Activated CD8-positive, alpha-beta T cell treated with anti-CD3 and anti-CD28 coated beads for 36 hours (primary cell): ENCODE measurements at regions of chr9 and their contacts with region 1.

Region 1: DNA sequence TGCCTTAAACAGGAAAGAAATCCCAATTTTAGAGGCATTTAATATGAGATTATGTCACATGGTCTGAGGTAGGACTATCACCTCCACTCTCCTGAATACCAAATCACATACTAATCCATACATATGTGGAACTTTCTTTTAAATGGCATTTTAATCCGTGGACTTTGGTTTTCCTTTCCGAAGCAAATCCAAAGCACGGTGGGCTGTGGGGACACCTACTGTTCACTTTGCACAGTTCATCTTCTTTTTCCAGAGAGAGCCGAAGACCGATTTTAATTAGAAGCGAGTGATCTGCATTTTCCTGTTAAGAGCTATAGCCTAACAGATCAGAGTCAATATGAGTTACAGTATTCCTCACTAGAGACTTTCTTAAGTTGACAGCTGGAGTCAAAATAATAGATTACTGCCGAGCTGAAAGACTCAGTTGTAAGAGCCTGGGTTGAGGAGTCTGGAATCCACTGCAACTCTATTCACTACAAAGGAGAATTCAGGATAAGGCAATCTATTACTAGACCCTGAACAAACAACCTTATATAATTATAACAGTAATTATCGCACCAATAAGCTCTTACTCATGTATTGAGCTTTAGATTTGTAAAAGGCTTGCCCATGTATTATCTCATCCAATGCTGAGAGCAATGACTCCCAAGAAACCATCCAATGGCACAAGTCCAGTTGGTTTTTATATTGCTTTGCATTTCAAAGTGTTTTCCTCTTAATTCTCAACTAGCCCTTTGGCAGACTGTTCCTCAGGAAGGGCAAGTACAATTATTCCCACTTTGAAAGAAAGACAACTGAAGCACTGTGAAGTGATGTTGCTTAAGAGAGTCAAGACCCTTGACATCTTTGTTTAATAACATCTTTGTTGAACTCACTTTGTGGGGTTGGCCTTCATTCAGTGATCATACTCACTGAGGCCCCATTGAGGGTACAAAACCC is 144.7 kb downstream of the TRPM6 start:
- DNase-seq: peak; percentile 41
- ATAC-seq: no peak
- H3K4me3 Mint-ChIP-seq: no peak overlapping the region
- H3K27ac Mint-ChIP-seq: no peak overlapping the region
- H3K4me1 Mint-ChIP-seq: no peaks in the 10 kb centered on the region
- H3K27me3 Mint-ChIP-seq: peaks cover 17% of the 10 kb centered on the region
- CTCF ChIP-seq: peak; percentile 69

Region 2: GRCh38 chr9:74595286-74595685 is 147.8 kb before region 1 on chr9:
- CTCF ChIA-PET with region 1: no interaction called
- POLR2A ChIA-PET with region 1: no interaction called
- intact Hi-C with region 1: loop called (anchors 10 kb)
- DNase-seq: no peak
- ATAC-seq: no peak
- H3K4me3 Mint-ChIP-seq: no peak overlapping the region
- H3K27ac Mint-ChIP-seq: no peak overlapping the region
- H3K4me1 Mint-ChIP-seq: no peaks in the 10 kb centered on the region
- H3K27me3 Mint-ChIP-seq: peaks cover 8% of the 10 kb centered on the region
- CTCF ChIP-seq: no peak